ENCODE measurements at regions of chr1 and their contacts with region 1.

Region 1: GRCh38 chr1:116794804-116795481 is 40.7 kb downstream of the CD2 start:
- DNase-seq: no peak
- H3K4me3 Mint-ChIP-seq: no peak overlapping the region
- H3K27ac Mint-ChIP-seq: no peak overlapping the region
- H3K4me1 Mint-ChIP-seq: peaks cover 46% of the 10 kb centered on the region
- H3K27me3 Mint-ChIP-seq: no peaks in the 10 kb centered on the region

Region 2: GRCh38 chr1:116777831-116778830 is 16.8 kb before region 1 on chr1:
- CTCF ChIA-PET with region 1: interaction called, 4 read pairs
- intact Hi-C with region 1: loop called (anchors 1 kb)
- DNase-seq: no peak
- H3K4me3 Mint-ChIP-seq: peak overlapping the region; percentile 49
- H3K27ac Mint-ChIP-seq: peak overlapping the region; percentile 80
- H3K4me1 Mint-ChIP-seq: peaks cover 38% of the 10 kb centered on the region
- H3K27me3 Mint-ChIP-seq: no peaks in the 10 kb centered on the region